ENCODE measurements at regions of chr3 and their contacts with region 1.

Region 1: DNA sequence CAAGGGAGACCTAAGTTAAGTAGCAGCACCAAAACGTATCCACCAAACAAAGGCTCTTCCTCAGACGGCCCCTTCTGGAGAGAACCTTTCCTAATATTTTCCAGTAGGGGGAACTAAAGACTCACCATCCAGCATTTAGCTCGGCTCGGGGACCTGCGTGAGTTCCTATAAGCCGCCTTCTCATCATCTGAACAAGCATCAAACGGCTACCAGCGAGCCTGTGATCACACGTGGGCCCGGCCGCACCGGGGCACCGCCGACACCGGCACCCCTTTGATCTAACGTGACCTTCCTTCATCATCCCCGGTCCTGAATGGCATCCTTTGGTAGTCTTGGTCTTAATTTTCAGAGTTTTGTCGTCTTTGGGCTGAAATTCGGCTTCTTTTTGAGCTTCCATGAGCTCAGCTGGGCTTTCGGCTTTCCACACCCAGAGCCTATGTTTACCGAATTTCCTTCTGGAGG is 1.4 kb upstream of the ROBO2 start:
- DNase-seq: peak; percentile 85
- ATAC-seq: peak; percentile 85
- H3K4me3 ChIP-seq: peak overlapping the region; percentile 48
- H3K27ac ChIP-seq: no peak overlapping the region
- H3K4me1 ChIP-seq: no peaks in the 10 kb centered on the region
- H3K27me3 ChIP-seq: peaks cover 29% of the 10 kb centered on the region
- CTCF ChIP-seq: peak; percentile 89
- POLR2A ChIP-seq: no peak
- RAD21 ChIP-seq: peak; percentile 89

Region 2: DNA sequence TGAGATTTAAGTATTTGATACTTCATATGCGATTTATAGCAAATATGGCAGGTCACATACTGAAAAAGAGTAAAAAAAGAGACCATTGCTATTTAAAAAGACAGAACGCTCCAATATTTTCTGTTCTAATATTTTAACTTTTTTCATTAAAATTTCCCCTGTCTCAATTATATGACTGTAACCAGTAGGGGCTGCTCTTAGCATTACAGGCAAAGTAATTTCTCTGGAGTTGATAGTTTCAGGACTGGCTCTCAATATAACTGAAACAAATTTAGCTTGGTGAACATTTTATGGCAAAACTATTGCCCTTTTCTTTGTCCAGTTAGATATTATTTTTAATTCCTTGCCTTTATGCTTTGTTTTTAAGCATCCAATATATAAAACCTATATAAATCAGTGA is 284.9 kb before region 1 on chr3:
- CTCF ChIA-PET with region 1: interaction called, 6 read pairs
- POLR2A ChIA-PET with region 1: no interaction called
- dilution Hi-C with region 1: no loop called
- in situ Hi-C with region 1: no loop called
- intact Hi-C with region 1: loop called (anchors 1 kb)
- DNase-seq: peak; percentile 0
- ATAC-seq: peak; percentile 84
- H3K4me3 ChIP-seq: no peak overlapping the region
- H3K27ac ChIP-seq: no peak overlapping the region
- H3K4me1 ChIP-seq: no peaks in the 10 kb centered on the region
- H3K27me3 ChIP-seq: no peaks in the 10 kb centered on the region
- CTCF ChIP-seq: peak; percentile 36
- POLR2A ChIP-seq: no peak
- RAD21 ChIP-seq: 0 out of 2 replicates have a peak, but pooled peaks have one; percentile 21

Region 3: DNA sequence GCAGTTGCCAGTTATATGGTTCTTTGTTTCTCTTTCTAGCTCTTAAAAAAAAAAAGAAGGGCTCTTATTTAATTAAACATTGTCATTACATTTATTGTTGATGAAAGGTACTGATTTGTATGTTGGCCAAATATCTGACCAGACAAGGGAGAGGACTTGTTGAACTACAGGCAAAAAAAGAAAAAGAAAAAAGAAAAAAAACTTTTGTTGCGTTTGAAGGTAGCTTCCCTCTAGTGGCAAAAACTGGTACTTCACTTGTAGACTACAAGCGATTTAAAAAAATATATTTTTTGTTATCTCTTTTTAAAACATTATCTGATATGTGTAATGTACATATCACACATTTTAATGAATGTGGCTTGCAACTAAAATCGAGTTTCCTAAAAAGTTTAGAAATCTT is 282.0 kb after region 1 on chr3:
- CTCF ChIA-PET with region 1: interaction called, 8 read pairs
- POLR2A ChIA-PET with region 1: no interaction called
- dilution Hi-C with region 1: no loop called
- in situ Hi-C with region 1: loop called (anchors 10 kb)
- intact Hi-C with region 1: loop called (anchors 1 kb)
- DNase-seq: peak; percentile 67
- ATAC-seq: peak; percentile 68
- H3K4me3 ChIP-seq: no peak overlapping the region
- H3K27ac ChIP-seq: no peak overlapping the region
- H3K4me1 ChIP-seq: 0 out of 2 replicates have a peak, but pooled peaks cover 2% of the 10 kb centered on the region
- H3K27me3 ChIP-seq: no peaks in the 10 kb centered on the region
- CTCF ChIP-seq: peak; percentile 68
- POLR2A ChIP-seq: no peak
- RAD21 ChIP-seq: peak; percentile 44

Region 4: DNA sequence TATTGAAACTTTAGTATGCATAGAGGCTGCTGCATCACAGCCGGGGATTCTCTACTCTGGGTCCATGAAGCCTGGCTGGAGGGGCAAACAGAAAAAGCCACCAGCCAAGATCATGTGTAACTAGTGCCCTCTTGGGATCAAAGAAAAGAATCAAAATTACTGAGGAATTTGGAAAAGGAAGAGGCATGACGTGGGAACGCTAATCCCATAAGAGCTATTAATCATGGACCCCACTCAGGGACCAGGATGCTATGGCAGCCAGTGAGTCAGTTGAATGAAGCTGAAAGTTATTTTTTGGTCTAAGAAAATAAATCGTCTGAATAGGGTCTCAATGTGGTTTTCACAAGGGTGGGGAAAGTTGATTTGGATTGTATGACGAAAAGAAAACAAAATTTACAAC is 1166.5 kb after region 1 on chr3:
- CTCF ChIA-PET with region 1: no interaction called
- POLR2A ChIA-PET with region 1: no interaction called
- dilution Hi-C with region 1: no loop called
- in situ Hi-C with region 1: loop called (anchors 25 kb)
- intact Hi-C with region 1: loop called (anchors 10 kb)
- DNase-seq: peak; percentile 67
- ATAC-seq: peak; percentile 80
- H3K4me3 ChIP-seq: peak overlapping the region; percentile 7; the same call in 1 of the 2 replicates
- H3K27ac ChIP-seq: no peak overlapping the region
- H3K4me1 ChIP-seq: no peaks in the 10 kb centered on the region
- H3K27me3 ChIP-seq: no peaks in the 10 kb centered on the region
- CTCF ChIP-seq: peak; percentile 33; the same call in 1 of the 2 replicates
- POLR2A ChIP-seq: no peak
- RAD21 ChIP-seq: peak; percentile 61

Measured in IMR-90 (cell line).